Right ventricle myocardium inferior (tissue), 1 donor: ENCODE measurements at regions of chr9 and their contacts with region 1.

Region 1: DNA sequence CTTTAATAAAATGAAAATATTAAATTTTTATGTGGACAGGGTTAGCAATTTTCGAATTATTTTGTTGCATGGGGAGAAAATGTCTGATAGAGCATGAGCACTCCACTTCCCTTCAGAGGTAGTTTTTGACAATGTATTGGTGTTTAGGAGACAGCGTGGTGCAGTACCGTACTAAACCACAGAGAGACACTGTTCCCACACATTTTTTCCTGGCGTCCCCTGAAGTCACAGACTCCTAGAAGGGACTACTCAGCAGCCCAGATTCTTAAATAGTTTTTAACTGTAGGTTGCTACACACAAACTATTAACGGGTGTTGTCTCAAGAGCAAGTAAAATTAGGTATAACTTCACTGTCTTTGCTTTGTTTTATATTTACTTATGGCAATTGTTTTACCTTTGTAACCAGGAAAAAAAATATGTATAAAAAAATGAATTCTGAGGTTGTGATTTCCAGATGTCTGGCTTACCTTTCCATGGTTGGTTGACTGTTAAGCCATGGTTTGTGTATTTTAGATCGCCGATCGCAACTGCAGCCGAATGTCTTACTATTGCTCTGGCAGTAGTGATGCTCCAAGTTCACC is 171.2 kb downstream of the DOCK8 start:
- DNase-seq: no peak
- ATAC-seq: peak; percentile 93

Region 2: GRCh38 chr9:406886-407654 is 21.2 kb after region 1 on chr9:
- intact Hi-C with region 1: no loop called
- DNase-seq: no peak
- ATAC-seq: peak; percentile 79

Region 3: GRCh38 chr9:567128-567746 is 181.3 kb after region 1 on chr9:
- intact Hi-C with region 1: no loop called
- DNase-seq: no peak
- ATAC-seq: no peak

Region 4: GRCh38 chr9:806285-807156 is 420.6 kb after region 1 on chr9:
- intact Hi-C with region 1: loop called (anchors 5 kb)
- DNase-seq: no peak
- ATAC-seq: no peak